ENCODE measurements at regions of chr5 and their contacts with region 1.

Region 1: GRCh38 chr5:116574367-116575325 is at the start of gene SEMA6A:
- DNase-seq: peak; percentile 90 to 97
- H3K4me3 ChIP-seq: peak within 1 kb of the TSS; percentile 67 to 86 (median 68)
- H3K27ac ChIP-seq: peak within 1 kb of the TSS; percentile 26 to 87 (median 68)
- H3K4me1 ChIP-seq: peaks cover 6 to 66% (median 55%) of the 10 kb centered on the region in 4 donors
- H3K27me3 ChIP-seq: peaks cover 0 to 51% (median 28%) of the 10 kb centered on the region in 3 donors
- CTCF ChIP-seq: peak in 1 of 7 experiments; percentile 16
- EP300 ChIP-seq: no peak
- POLR2A ChIP-seq: no peak
- total RNA-seq, gene SEMA6A: 5.7 to 37.5 (median 23.7) TPM

Region 2: DNA sequence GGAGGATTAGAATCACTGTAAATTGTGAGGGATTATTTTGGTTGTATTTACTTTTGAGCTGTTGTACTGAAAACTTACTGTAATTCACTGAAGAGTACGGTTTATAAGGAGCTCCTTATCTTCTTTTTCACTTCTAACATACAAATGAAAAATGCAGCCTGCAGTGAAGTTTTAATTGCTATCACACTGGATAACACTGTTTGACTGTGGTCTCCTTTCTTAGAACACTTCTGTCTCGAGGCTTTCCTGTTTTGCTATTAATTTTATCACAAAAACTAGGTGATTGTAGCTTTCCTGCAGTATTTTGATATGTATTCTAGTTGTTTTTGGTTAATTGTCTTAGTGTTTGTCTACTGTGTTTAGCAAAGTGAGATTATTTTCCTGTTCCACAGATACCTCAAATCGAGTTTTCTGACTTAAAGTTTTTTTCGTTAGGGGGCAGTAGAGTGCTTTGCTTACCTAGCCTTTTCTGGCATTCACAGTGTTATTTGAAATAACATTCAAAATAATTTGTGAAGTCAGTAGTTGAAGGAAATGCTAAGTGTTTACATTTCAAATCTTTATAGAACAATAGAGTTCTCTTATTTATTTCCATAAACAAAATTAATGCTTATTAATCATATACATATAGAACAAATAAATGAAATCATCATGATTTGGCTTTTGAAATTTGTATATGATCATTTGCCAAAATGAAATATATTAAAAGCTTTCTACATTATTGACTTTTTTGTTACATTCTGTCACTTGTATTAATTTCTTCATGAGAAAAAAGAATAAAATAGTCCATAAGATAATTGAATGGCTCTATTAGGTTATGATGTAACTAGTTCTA is 436.9 kb before region 1 on chr5:
- intact Hi-C with region 1: loop called (anchors 5 kb)
- DNase-seq: peak in 1 of 2 donors; percentile 79
- H3K4me3 ChIP-seq: no peak overlapping the region
- H3K27ac ChIP-seq: no peak overlapping the region
- H3K4me1 ChIP-seq: peaks cover 0 to 12% (median 3%) of the 10 kb centered on the region in 4 donors
- H3K27me3 ChIP-seq: no peaks in the 10 kb centered on the region
- CTCF ChIP-seq: peak in 4 of 7 experiments; percentile 42 to 75 (median 56)
- EP300 ChIP-seq: no peak
- POLR2A ChIP-seq: no peak

Region 3: DNA sequence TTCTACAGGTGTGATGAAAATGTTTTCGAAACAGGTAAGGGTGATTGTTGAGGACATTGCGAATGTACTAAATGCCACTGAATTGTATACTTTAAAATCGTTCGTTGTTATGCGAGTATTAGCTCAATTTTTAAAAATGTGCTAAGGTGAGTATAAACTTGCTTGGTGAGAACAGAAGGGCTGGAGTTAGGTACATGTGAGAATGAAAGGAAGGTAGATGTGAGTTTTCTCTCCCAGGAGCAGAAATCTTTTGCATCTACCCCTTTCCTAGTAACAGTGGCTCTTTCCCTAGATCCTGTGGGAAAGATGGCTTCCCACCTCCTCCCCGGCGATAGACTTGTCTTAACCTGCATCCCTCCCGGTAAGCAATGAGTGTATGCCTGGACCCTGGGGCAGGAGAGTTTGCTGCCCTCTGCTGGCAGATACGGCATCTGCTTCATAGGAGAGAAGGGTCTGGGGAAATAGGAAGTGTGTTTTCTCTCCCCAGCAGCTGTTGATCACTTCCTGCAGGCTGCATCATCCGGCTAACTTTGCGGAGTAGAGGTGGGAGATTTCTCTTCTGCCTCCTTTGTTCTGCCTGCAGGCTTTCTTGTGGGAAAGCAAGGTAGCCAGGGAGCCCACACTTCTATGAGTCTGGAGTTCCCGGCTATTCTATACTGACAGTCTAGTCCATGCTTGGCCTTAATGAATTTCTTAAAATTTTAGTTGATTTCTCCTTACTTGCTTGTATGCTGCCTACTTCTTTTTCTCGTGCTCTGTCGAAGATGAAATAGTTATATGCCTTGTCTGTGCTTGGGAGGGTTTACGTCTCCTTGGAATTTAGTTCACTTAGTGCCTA is 373.3 kb after region 1 on chr5:
- intact Hi-C with region 1: loop called (anchors 10 kb)
- DNase-seq: peak; percentile 74 to 80
- H3K4me3 ChIP-seq: no peak overlapping the region
- H3K27ac ChIP-seq: no peak overlapping the region
- H3K4me1 ChIP-seq: no peaks in the 10 kb centered on the region
- H3K27me3 ChIP-seq: no peaks in the 10 kb centered on the region
- CTCF ChIP-seq: peak in 5 of 7 experiments; percentile 59 to 74 (median 62)
- EP300 ChIP-seq: no peak
- POLR2A ChIP-seq: no peak